ENCODE measurements at regions of chr14 and their contacts with region 1.

Region 1: DNA sequence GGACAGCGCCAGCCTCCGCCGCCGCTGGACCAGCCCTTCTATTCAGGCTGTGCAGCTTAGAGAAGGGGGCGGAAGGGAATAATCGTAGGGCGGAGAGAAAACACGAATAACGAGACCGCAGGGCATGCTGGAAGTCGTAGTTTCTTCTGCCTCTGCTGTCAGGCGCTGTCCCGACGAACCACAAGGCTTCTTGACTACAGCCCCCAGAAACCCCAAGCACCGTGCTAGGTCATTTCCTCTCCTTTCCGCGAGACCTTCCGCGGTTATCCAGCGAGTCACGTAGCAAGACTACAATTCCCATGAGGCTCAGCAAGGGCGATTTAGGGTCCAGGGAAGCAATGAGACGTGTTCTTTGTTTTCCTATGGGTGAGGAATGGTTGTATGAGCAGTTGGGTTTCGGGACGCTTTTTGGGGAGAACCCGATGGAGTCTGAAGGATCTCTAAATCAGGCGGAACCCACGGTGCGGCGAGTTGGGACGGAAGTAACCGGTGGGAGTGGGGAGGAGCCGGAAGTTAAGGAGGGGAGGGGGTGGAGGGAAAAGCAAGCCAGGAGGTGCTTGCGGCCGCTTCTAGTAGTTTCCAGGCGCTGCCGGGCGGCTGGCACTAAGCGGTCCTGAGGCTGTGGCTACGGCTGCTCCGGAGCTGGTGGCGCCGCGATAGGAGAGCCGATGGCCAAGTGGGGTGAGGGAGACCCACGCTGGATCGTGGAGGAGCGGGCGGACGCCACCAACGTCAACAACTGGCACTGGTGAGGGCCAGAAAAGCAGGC is at the starts of genes AHSA1 and VIPAS39:
- DNase-seq: peak; percentile 77 to 96 (median 82)
- ATAC-seq: peak; percentile 95
- H3K4me3 ChIP-seq: peak within 1 kb of the TSS; percentile 96
- H3K27ac ChIP-seq: peak within 1 kb of the TSS; percentile 99
- H3K4me1 ChIP-seq: peaks cover 7 to 11% of the 10 kb centered on the region in 2 experiments; a peak in 3 of 5 replicates
- H3K27me3 ChIP-seq: no peaks in the 10 kb centered on the region
- CTCF ChIP-seq: peak in 1 of 3 experiments; percentile 7; a peak in 1 of 6 replicates
- EP300 ChIP-seq: no peak
- POLR2A ChIP-seq: peak; percentile 78
- RAD21 ChIP-seq: no peak
- polyA plus RNA-seq, gene AHSA1: 41.4 to 75.1 TPM
- polyA plus RNA-seq, gene VIPAS39: 5.7 to 10.5 TPM

Region 2: DNA sequence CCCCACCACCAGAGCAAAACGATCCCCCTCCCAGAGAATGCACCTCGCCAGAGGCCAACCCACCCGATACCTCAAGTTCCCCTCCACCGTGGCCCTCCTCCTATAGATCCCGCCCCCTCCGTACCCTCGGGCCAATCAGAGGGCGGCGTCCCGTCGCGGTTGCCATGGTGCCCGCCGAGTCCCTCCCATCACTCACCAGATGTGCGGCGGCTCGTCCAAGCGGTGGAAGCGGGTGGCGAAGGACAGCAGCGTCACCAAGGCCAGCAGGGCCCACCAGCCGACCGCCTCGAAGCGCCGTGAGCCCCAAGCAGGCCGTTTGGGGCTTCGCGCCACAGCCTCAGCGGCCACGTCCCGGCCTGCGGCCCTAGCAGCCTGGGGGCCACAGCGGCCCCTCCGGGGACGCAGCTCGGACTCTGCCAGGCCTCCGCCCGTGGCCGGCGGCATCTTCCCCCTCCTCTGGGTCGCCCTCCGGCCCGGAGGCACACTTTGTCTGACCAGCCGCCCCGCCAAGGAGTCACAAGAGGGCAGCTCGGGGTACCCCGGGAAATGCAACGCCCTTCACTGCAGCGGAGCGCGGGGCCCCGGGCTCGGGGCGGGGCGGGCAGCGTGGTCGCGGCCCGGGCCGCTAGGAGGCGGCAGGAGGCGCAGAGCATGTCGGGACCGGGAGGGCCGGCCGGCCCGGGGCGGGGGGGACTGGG is 137.3 kb before region 1 on chr14 and contains the start of gene POMT2:
- CTCF ChIA-PET with region 1: no interaction called
- POLR2A ChIA-PET with region 1: no interaction called
- in situ Hi-C with region 1: no loop called
- intact Hi-C with region 1: loop called (anchors 2 kb)
- DNase-seq: peak; percentile 90 to 93 (median 92)
- ATAC-seq: peak; percentile 85
- H3K4me3 ChIP-seq: peak within 1 kb of the TSS; percentile 98
- H3K27ac ChIP-seq: peak within 1 kb of the TSS; percentile 95
- H3K4me1 ChIP-seq: peaks cover 10 to 11% of the 10 kb centered on the region in 2 experiments; a peak in 4 of 5 replicates
- H3K27me3 ChIP-seq: no peaks in the 10 kb centered on the region
- CTCF ChIP-seq: peak; percentile 25 to 43 (median 31); a peak in 3 of 6 replicates
- EP300 ChIP-seq: no peak
- POLR2A ChIP-seq: peak; percentile 52; the same call in 1 of the 2 replicates
- RAD21 ChIP-seq: no peak
- polyA plus RNA-seq, gene POMT2: 0.39 to 0.74 TPM

Region 3: GRCh38 chr14:77409131-77409533 is 48.6 kb before region 1 on chr14:
- CTCF ChIA-PET with region 1: no interaction called
- POLR2A ChIA-PET with region 1: no interaction called
- in situ Hi-C with region 1: no loop called
- intact Hi-C with region 1: loop called (anchors 5 kb)
- DNase-seq: peak in 1 of 4 experiments; percentile 61
- ATAC-seq: peak; percentile 67
- H3K4me3 ChIP-seq: no peak overlapping the region
- H3K27ac ChIP-seq: no peak overlapping the region
- H3K4me1 ChIP-seq: peaks cover 12 to 37% of the 10 kb centered on the region in 2 experiments
- H3K27me3 ChIP-seq: no peaks in the 10 kb centered on the region
- CTCF ChIP-seq: peak; percentile 30 to 45 (median 39); a peak in 4 of 6 replicates
- EP300 ChIP-seq: no peak
- POLR2A ChIP-seq: no peak
- RAD21 ChIP-seq: peak; percentile 27 to 54

Region 4: GRCh38 chr14:77423423-77423822 is 34.3 kb before region 1 on chr14 and contains the start of gene NOXRED1:
- CTCF ChIA-PET with region 1: no interaction called
- POLR2A ChIA-PET with region 1: no interaction called
- in situ Hi-C with region 1: no loop called
- intact Hi-C with region 1: no loop called
- DNase-seq: no peak
- ATAC-seq: no peak
- H3K4me3 ChIP-seq: no peak within 1 kb of the TSS
- H3K27ac ChIP-seq: no peak within 1 kb of the TSS
- H3K4me1 ChIP-seq: no peaks in the 10 kb centered on the region
- H3K27me3 ChIP-seq: no peaks in the 10 kb centered on the region
- CTCF ChIP-seq: no peak
- EP300 ChIP-seq: no peak
- POLR2A ChIP-seq: no peak
- RAD21 ChIP-seq: no peak
- polyA plus RNA-seq, gene NOXRED1: 0.30 to 0.52 TPM

Region 5: GRCh38 chr14:77616454-77617229 is 158.9 kb after region 1 on chr14 and contains the start of gene SPTLC2:
- CTCF ChIA-PET with region 1: no interaction called
- POLR2A ChIA-PET with region 1: no interaction called
- in situ Hi-C with region 1: no loop called
- intact Hi-C with region 1: loop called (anchors 5 kb)
- DNase-seq: peak; percentile 97 to 98 (median 98)
- ATAC-seq: peak; percentile 98
- H3K4me3 ChIP-seq: peak within 1 kb of the TSS; percentile 96
- H3K27ac ChIP-seq: peak within 1 kb of the TSS; percentile 78
- H3K4me1 ChIP-seq: peaks cover 7 to 9% of the 10 kb centered on the region in 2 experiments; a peak in 3 of 5 replicates
- H3K27me3 ChIP-seq: no peaks in the 10 kb centered on the region
- CTCF ChIP-seq: peak in 1 of 3 experiments; percentile 25; a peak in 2 of 6 replicates
- EP300 ChIP-seq: no peak
- POLR2A ChIP-seq: peak; percentile 70
- RAD21 ChIP-seq: no peak
- polyA plus RNA-seq, gene SPTLC2: 4.5 to 5.4 TPM